WTC11 (cell line): ENCODE measurements at regions of chr2 and their contacts with region 1.

Region 1: DNA sequence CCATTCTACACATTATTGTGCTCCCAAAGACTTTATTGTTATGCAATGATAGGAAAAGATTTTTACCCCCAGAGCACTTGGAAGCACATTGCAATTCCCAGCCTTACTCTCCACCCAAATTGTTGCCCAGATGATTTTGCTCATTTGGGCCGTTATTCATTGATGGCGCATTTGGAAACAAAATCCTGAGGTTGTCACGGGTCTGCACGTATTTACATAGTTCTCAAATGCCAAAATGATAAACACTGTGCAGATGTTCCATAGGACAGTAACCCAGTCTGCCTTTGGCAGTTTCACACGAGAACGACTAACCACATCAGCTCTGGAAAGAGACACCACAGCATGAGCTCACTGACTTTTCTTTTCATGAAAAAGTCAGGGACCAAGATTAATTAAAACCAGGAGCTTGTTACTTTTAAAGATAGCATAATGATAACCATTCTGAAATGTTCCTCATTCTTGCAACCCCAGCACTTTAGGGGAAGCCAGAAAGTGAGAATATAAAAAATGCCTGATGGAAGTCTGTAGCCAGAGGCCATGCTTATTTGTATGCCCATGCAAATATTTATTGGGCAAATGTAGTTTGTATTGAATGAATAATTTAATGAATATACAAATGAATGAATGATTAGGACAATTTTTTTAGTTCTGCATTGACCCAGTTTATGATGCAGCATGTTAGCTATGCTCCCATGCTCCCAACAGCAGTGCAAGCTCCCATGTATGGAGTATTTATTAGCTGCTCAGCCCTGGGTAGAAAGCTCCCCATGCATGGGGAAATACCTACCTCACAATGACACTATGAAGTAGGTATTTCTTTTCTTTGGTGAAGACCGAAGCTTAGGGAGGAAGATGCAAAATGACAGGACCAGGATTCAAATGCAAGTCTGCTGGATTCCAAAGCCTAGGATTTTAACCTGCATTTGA is 84.6 kb downstream of the MAIP1 start:
- DNase-seq: no peak
- ATAC-seq: peak; percentile 47
- H3K4me3 Mint-ChIP-seq: no peak overlapping the region
- H3K27ac Mint-ChIP-seq: no peak overlapping the region
- H3K4me1 Mint-ChIP-seq: peaks cover 17% of the 10 kb centered on the region
- H3K27me3 Mint-ChIP-seq: peaks cover 3% of the 10 kb centered on the region; the same call in 1 of the 2 replicates
- CTCF ChIP-seq: no peak

Region 2: DNA sequence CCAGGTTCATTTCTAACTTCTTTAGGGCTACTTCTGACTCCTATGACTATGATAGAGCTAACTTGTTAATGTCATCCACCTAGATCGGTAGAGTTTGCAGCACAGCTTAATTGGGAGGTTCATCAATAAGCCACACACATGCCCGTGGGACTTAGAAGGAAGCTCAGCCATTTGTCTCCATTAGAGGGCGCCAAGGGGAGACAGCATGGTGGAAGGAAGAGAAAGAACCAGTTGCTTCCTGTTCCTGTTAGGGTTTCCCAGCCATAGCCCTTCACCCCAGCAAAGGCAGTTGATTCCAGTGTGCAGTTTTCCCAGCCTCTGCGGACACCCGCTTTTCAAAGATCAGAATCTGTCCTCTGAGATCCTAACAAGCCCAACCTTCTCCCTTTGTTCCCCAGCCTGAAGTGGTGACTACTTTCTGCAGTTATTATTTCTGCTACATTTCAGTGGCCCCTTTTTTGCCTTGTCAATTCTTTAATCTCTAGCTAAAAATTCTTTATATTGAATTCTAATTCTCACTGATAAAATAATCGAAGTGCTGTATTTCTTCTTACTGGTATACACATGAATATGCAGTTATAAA is 54.3 kb before region 1 on chr2:
- CTCF ChIA-PET with region 1: interaction called, 11 read pairs
- POLR2A ChIA-PET with region 1: no interaction called
- DNase-seq: peak; percentile 79
- ATAC-seq: peak; percentile 78
- H3K4me3 Mint-ChIP-seq: no peak overlapping the region
- H3K27ac Mint-ChIP-seq: no peak overlapping the region
- H3K4me1 Mint-ChIP-seq: peaks cover 37% of the 10 kb centered on the region
- H3K27me3 Mint-ChIP-seq: no peaks in the 10 kb centered on the region
- CTCF ChIP-seq: peak; percentile 40; the same call in 1 of the 2 replicates

Region 3: GRCh38 chr2:200013906-200014305 is 26.1 kb before region 1 on chr2:
- CTCF ChIA-PET with region 1: no interaction called
- POLR2A ChIA-PET with region 1: no interaction called
- DNase-seq: no peak
- ATAC-seq: no peak
- H3K4me3 Mint-ChIP-seq: no peak overlapping the region
- H3K27ac Mint-ChIP-seq: no peak overlapping the region
- H3K4me1 Mint-ChIP-seq: peaks cover 14% of the 10 kb centered on the region
- H3K27me3 Mint-ChIP-seq: peaks cover 5% of the 10 kb centered on the region
- CTCF ChIP-seq: no peak

Region 4: GRCh38 chr2:200026332-200027230 is 13.4 kb before region 1 on chr2:
- CTCF ChIA-PET with region 1: no interaction called
- POLR2A ChIA-PET with region 1: no interaction called
- DNase-seq: no peak
- ATAC-seq: no peak
- H3K4me3 Mint-ChIP-seq: no peak overlapping the region
- H3K27ac Mint-ChIP-seq: no peak overlapping the region
- H3K4me1 Mint-ChIP-seq: peaks cover 11% of the 10 kb centered on the region
- H3K27me3 Mint-ChIP-seq: no peaks in the 10 kb centered on the region
- CTCF ChIP-seq: no peak